ENCODE measurements at regions of chr11 and their contacts with region 1.

Region 1: DNA sequence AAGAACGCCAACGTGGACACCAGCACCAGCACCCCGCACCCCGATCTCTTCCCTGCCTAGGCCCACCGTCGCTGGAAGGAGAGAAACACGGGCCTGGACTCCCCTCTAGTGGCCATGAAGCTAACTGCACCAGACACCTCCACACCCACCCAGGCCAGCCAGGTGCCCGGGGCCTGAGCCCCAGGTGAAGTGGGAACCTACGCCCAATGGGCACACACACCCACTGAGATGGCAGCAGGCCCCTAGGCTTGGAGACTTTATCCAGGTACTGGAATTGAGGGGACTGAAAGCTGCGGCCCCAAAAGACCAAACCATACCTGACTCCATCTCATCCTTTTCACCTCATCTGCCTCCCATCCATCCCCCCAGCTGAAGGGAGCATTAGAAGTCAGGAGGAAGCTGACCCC is 81.0 kb downstream of the BUD13 start:
- DNase-seq: peak; percentile 78 to 86
- H3K4me3 ChIP-seq: no peak overlapping the region
- H3K4me3 Mint-ChIP-seq: no peak overlapping the region
- H3K27ac Mint-ChIP-seq: no peak overlapping the region
- H3K4me1 ChIP-seq: peaks cover 47% of the 10 kb centered on the region
- H3K4me1 Mint-ChIP-seq: peaks cover 17% of the 10 kb centered on the region
- H3K27me3 ChIP-seq: no peaks in the 10 kb centered on the region
- H3K27me3 Mint-ChIP-seq: no peaks in the 10 kb centered on the region
- CTCF ChIP-seq: peak; percentile 98 to 100

Region 2: GRCh38 chr11:116454020-116454645 is 237.6 kb before region 1 on chr11:
- CTCF ChIA-PET with region 1: interaction called, 3 read pairs
- POLR2A ChIA-PET with region 1: no interaction called
- intact Hi-C with region 1: loop called (anchors 1 kb)
- DNase-seq: peak; percentile 61 to 69
- H3K4me3 ChIP-seq: no peak overlapping the region
- H3K4me3 Mint-ChIP-seq: no peak overlapping the region
- H3K27ac Mint-ChIP-seq: no peak overlapping the region
- H3K4me1 ChIP-seq: peaks cover 14% of the 10 kb centered on the region
- H3K4me1 Mint-ChIP-seq: peaks cover 14% of the 10 kb centered on the region
- H3K27me3 ChIP-seq: no peaks in the 10 kb centered on the region
- H3K27me3 Mint-ChIP-seq: no peaks in the 10 kb centered on the region
- CTCF ChIP-seq: peak; percentile 77 to 83

Region 3: GRCh38 chr11:116513894-116514293 is 177.9 kb before region 1 on chr11:
- CTCF ChIA-PET with region 1: interaction called, 5 read pairs
- POLR2A ChIA-PET with region 1: no interaction called
- intact Hi-C with region 1: loop called (anchors 1 kb)
- DNase-seq: peak; percentile 60 to 69
- H3K4me3 ChIP-seq: no peak overlapping the region
- H3K4me3 Mint-ChIP-seq: no peak overlapping the region
- H3K27ac Mint-ChIP-seq: no peak overlapping the region
- H3K4me1 ChIP-seq: no peaks in the 10 kb centered on the region
- H3K4me1 Mint-ChIP-seq: no peaks in the 10 kb centered on the region
- H3K27me3 ChIP-seq: no peaks in the 10 kb centered on the region; the same call in 1 of the 2 replicates
- H3K27me3 Mint-ChIP-seq: peaks cover 28% of the 10 kb centered on the region
- CTCF ChIP-seq: peak; percentile 51 to 64